ENCODE measurements at regions of chr22 and their contacts with region 1.

Region 1: GRCh38 chr22:31107178-31107893 is at the start of gene SELENOM:
- H3K4me3 Mint-ChIP-seq: peak within 1 kb of the TSS; percentile 75
- H3K27ac Mint-ChIP-seq: peak within 1 kb of the TSS; percentile 47
- H3K4me1 Mint-ChIP-seq: peaks cover 13% of the 10 kb centered on the region
- H3K27me3 Mint-ChIP-seq: peaks cover 22% of the 10 kb centered on the region

Region 2: GRCh38 chr22:30890686-30891442 is 216.5 kb before region 1 on chr22:
- intact Hi-C with region 1: no loop called
- H3K4me3 Mint-ChIP-seq: no peak overlapping the region
- H3K27ac Mint-ChIP-seq: no peak overlapping the region
- H3K4me1 Mint-ChIP-seq: no peaks in the 10 kb centered on the region
- H3K27me3 Mint-ChIP-seq: no peaks in the 10 kb centered on the region

Region 3: GRCh38 chr22:31211862-31212730 is 104.8 kb after region 1 on chr22 and contains the start of gene LIMK2:
- intact Hi-C with region 1: loop called (anchors 1 kb)
- H3K4me3 Mint-ChIP-seq: peak within 1 kb of the TSS; percentile 90
- H3K27ac Mint-ChIP-seq: peak within 1 kb of the TSS; percentile 66
- H3K4me1 Mint-ChIP-seq: peaks cover 63% of the 10 kb centered on the region
- H3K27me3 Mint-ChIP-seq: no peaks in the 10 kb centered on the region

Region 4: DNA sequence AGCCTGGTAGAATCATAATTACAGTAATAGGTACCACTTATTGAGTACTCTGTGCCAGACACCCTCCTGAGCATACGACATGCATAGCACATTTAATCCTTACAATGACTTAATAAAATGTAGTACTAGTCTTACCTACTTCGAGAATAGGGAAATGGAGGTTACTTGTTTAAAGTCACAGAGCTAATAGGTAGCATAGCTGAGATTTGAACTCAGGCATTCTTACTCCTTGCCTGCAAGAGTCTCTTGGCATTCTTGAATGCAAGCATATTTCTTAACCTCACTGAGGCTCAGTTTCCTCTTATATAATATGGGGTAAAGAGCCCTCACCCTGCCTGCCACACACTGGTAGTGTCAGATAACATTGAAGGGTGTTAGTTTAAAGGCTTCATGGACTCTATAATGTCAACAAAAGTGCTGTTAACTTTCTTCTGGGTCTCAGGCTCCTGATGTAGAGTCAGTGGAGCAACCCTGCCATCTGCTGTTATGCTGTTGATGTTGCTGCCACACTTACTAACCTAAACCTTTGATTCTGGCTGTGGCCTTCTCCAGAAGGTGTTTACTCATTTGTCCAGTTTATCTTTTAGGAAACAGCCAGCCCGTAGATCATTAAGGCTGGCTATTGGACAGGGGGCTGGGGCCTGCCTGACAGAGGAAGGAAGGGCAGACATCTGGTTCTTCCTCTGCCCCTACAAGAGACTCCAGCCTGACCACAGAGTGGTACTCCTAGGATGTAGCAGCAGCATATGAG is 123.7 kb after region 1 on chr22:
- intact Hi-C with region 1: loop called (anchors 2 kb)
- H3K4me3 Mint-ChIP-seq: peak overlapping the region; percentile 17
- H3K27ac Mint-ChIP-seq: peak overlapping the region; percentile 89
- H3K4me1 Mint-ChIP-seq: peaks cover 77% of the 10 kb centered on the region
- H3K27me3 Mint-ChIP-seq: no peaks in the 10 kb centered on the region

Measured in dendritic cell treated with granulocyte-macrophage colony-stimulating factor and Interleukin-4, amounts not matched to agents 40 ng/mL and 50 ng/mL, for 4 days (primary cell).